ENCODE measurements at regions of chr22 and their contacts with region 1.

Region 1: GRCh38 chr22:39873965-39874364 is 19.6 kb downstream of the ENTHD1 start:
- DNase-seq: no peak
- H3K4me3 ChIP-seq: no peak overlapping the region
- CTCF ChIP-seq: no peak

Region 2: DNA sequence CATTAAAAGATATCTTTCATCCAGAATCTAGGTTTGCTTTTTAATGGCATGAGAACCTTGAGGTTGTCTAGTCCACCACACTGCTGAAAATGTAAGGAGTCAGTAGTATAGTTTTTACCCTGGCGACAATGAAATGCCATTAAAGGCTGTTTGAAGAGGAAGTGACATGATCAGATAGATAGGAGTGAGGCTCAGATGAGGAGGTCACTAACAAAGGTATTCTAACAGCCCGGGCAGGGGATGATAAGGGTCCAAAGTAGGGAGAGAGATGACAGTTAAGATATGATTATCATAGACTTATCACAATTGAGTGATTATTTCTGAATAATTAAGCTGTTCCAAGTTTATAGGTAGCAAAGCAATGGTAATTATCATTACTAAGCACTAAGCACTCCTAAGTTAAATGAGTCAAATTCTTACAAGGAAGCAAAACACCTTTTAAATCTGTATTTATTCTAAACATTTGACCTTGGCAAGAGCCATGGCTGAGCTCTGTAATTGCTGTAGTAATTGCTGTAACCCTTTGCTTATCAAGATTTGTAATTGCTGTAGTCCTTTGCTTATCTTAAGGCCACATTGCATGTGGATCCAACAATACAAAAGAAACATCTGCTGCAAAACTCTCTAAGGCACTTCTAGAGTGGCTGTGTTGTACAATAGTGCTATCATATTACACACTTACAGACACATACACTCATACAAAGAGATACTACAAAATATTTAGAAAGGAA is 73.0 kb before region 1 on chr22:
- in situ Hi-C with region 1: loop called (anchors 5 kb)
- DNase-seq: no peak
- H3K4me3 ChIP-seq: no peak overlapping the region
- CTCF ChIP-seq: no peak

Region 3: DNA sequence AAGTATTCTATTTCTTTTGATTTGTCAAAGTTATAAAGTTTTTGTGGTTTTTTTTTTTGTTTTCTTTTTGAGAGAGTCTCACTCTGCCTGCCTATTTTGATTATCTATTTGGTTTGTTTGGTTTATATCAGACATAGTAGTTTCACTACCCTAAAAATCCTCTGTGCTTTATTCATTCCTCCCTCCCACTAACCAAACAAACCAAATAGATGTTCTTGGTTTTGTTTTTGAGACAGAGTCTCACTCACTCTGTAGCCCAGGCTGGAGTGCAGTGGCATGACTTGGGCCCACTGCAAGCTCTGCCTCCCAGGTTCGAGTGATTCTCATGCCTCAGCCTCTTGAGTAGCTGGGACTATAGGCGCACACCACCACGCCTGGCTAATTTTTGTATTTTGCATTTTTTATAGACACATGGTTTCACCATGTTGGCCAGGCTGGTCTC is 48.3 kb before region 1 on chr22:
- in situ Hi-C with region 1: no loop called
- DNase-seq: no peak
- H3K4me3 ChIP-seq: no peak overlapping the region
- CTCF ChIP-seq: no peak

Region 4: DNA sequence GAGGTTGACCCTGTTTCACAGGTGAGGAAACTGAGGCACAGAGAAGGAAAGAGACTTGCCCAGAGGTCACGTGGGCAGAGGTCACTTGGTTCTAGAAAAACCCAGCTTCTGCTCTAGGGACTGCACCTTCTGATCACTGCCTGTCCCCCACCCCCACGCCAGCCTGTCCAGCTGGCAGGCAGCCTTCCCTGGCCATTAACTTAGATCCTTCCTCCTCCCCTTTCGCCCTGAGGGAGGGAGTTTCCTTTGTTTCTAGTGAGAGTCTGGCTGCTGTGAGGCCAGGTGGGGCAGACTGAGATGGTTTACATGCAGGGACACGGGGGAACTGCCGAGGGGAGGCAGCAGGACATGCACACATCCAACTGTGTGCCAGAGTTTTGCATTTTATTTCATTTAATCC is 124.0 kb after region 1 on chr22:
- in situ Hi-C with region 1: no loop called
- DNase-seq: peak; percentile 15
- H3K4me3 ChIP-seq: no peak overlapping the region
- CTCF ChIP-seq: no peak

Measured in astrocyte of the cerebellum (primary cell).